ENCODE measurements at regions of chr2 and their contacts with region 1.

Region 1: GRCh38 chr2:32772638-32773447 is 145.0 kb downstream of the TTC27 start:
- DNase-seq: no peak
- H3K4me3 ChIP-seq: no peak overlapping the region
- H3K27ac ChIP-seq: no peak overlapping the region
- H3K4me1 ChIP-seq: no peaks in the 10 kb centered on the region
- H3K27me3 ChIP-seq: no peaks in the 10 kb centered on the region
- CTCF ChIP-seq: peak; percentile 62

Region 2: GRCh38 chr2:32942793-32943485 is 170.1 kb after region 1 on chr2:
- intact Hi-C with region 1: loop called (anchors 2 kb)
- DNase-seq: no peak
- H3K4me3 ChIP-seq: no peak overlapping the region
- H3K27ac ChIP-seq: no peak overlapping the region
- H3K4me1 ChIP-seq: no peaks in the 10 kb centered on the region
- H3K27me3 ChIP-seq: no peaks in the 10 kb centered on the region
- CTCF ChIP-seq: no peak

Region 3: GRCh38 chr2:33291278-33292013 is 518.6 kb after region 1 on chr2:
- intact Hi-C with region 1: loop called (anchors 10 kb)
- DNase-seq: peak; percentile 22
- H3K4me3 ChIP-seq: no peak overlapping the region
- H3K27ac ChIP-seq: peak overlapping the region; percentile 31
- H3K4me1 ChIP-seq: no peaks in the 10 kb centered on the region
- H3K27me3 ChIP-seq: no peaks in the 10 kb centered on the region
- CTCF ChIP-seq: no peak

Region 4: GRCh38 chr2:33372940-33373553 is 600.2 kb after region 1 on chr2:
- intact Hi-C with region 1: loop called (anchors 5 kb)
- DNase-seq: peak; percentile 52
- H3K4me3 ChIP-seq: no peak overlapping the region
- H3K27ac ChIP-seq: no peak overlapping the region
- H3K4me1 ChIP-seq: no peaks in the 10 kb centered on the region
- H3K27me3 ChIP-seq: no peaks in the 10 kb centered on the region
- CTCF ChIP-seq: peak; percentile 81

Measured in colonic mucosa (tissue), 4 donors.